Caco-2 (cell line): ENCODE measurements at regions of chr7 and their contacts with region 1.

Region 1: DNA sequence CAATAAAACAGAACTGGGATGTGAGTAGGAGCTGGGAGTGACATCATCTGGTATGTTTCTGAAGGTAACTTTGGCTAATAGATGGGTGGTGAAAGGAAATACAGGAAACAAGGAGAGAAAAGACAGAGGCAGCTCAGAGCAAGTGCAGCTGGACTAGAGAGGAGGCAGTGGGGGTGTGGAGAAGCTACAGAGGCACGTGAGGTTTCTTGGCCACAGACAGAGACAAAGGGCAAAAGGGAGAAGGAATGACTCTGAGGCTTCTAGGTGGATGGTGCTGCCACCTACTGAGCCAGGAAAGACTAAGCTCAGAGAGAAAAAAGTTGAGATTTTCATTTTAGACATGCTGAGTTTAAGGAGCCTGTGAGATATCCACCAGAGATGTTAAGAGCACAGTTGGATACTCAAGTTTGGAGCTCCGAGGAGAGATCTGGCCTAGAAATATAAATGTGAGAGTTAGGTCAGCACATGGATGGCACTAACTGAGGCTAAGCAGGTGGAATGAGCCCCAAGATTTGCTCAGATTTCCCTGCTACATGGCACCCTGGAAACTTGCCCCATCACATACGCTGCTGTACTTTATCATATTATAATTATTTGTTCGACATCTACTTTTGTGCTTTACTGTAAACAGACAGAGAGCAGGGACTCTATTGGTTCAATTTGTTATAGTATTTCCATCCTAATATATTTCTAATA is 293.0 kb upstream of the IMMP2L start:
- DNase-seq: peak; percentile 59 to 61
- H3K4me3 ChIP-seq: no peak overlapping the region
- H3K4me3 Mint-ChIP-seq: no peak overlapping the region
- H3K27ac Mint-ChIP-seq: no peak overlapping the region
- H3K4me1 ChIP-seq: peaks cover 10% of the 10 kb centered on the region
- H3K4me1 Mint-ChIP-seq: peaks cover 9% of the 10 kb centered on the region
- H3K27me3 ChIP-seq: no peaks in the 10 kb centered on the region
- H3K27me3 Mint-ChIP-seq: no peaks in the 10 kb centered on the region
- CTCF ChIP-seq: peak; percentile 46 to 75

Region 2: DNA sequence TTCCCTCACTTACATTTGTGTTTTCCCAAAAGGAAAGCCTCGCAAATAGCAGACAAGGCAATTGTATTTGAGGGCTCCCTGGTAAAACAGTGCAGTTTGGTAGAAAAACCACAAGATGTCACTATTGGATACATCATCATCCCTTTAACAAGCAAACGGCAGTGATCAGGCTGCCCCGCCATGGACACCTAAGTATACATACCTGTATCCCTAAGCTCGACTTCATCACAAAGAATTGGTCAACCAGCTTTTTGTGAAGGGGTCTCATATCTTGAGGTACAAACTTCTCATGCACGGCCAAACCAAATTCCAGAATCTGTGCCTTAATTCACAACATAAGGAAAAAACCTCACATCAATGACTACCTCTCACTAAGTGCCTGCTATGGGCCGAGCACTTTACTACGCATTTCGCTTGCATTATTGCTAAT is 113.5 kb before region 1 on chr7:
- CTCF ChIA-PET with region 1: interaction called, 40 read pairs
- POLR2A ChIA-PET with region 1: no interaction called
- intact Hi-C with region 1: loop called (anchors 1 kb)
- DNase-seq: peak; percentile 65 to 67
- H3K4me3 ChIP-seq: no peak overlapping the region
- H3K4me3 Mint-ChIP-seq: no peak overlapping the region
- H3K27ac Mint-ChIP-seq: no peak overlapping the region
- H3K4me1 ChIP-seq: peaks cover 6% of the 10 kb centered on the region; the same call in 1 of the 2 replicates
- H3K4me1 Mint-ChIP-seq: peaks cover 8% of the 10 kb centered on the region
- H3K27me3 ChIP-seq: no peaks in the 10 kb centered on the region
- H3K27me3 Mint-ChIP-seq: no peaks in the 10 kb centered on the region
- CTCF ChIP-seq: peak; percentile 69 to 70

Region 3: GRCh38 chr7:111763221-111763801 is 92.0 kb before region 1 on chr7:
- CTCF ChIA-PET with region 1: interaction called, 43 read pairs
- POLR2A ChIA-PET with region 1: no interaction called
- intact Hi-C with region 1: loop called (anchors 1 kb)
- DNase-seq: peak in 1 of 2 experiments; percentile 32
- H3K4me3 ChIP-seq: no peak overlapping the region
- H3K4me3 Mint-ChIP-seq: no peak overlapping the region
- H3K27ac Mint-ChIP-seq: no peak overlapping the region
- H3K4me1 ChIP-seq: peaks cover under 1% of the 10 kb centered on the region; the same call in 1 of the 2 replicates
- H3K4me1 Mint-ChIP-seq: no peaks in the 10 kb centered on the region
- H3K27me3 ChIP-seq: no peaks in the 10 kb centered on the region
- H3K27me3 Mint-ChIP-seq: no peaks in the 10 kb centered on the region
- CTCF ChIP-seq: peak; percentile 57 to 72

Region 4: DNA sequence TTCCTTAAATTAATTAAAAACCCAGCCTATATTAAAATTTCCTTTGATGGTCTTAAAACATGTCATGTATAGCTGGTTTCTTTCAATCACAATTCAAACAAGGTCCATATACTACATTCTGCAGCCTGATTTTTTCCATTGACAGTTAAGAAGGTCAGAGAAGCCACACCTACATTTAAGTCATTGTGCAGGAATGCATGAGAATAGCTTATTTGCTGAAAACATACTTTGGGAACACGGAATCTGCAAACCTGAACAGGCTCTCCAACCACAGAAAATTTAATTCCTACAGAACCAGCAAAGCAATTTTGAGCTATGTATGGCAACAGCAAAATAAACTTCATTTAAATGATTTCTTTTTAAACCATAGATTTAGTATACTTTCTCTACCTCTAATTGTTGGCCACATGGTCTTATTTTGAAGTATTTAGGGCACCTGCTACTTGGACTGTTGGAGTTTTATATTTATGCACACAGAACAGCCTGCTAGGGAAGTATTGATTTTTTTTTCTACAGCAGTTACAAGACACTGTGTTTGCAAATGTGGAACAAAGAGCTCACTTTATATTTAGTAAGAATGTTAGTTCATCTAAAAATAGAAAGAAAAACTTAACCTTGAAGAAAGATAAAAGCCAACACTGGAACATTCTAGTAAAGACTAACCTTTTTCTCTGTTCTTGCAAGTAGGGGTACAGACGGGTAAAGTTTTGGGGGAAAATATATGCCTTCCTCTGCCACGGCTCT is 52.1 kb before region 1 on chr7:
- CTCF ChIA-PET with region 1: no interaction called
- POLR2A ChIA-PET with region 1: no interaction called
- intact Hi-C with region 1: no loop called
- DNase-seq: no peak
- H3K4me3 ChIP-seq: no peak overlapping the region
- H3K4me3 Mint-ChIP-seq: no peak overlapping the region
- H3K27ac Mint-ChIP-seq: no peak overlapping the region
- H3K4me1 ChIP-seq: no peaks in the 10 kb centered on the region
- H3K4me1 Mint-ChIP-seq: no peaks in the 10 kb centered on the region
- H3K27me3 ChIP-seq: no peaks in the 10 kb centered on the region
- H3K27me3 Mint-ChIP-seq: no peaks in the 10 kb centered on the region
- CTCF ChIP-seq: no peak

Region 5: DNA sequence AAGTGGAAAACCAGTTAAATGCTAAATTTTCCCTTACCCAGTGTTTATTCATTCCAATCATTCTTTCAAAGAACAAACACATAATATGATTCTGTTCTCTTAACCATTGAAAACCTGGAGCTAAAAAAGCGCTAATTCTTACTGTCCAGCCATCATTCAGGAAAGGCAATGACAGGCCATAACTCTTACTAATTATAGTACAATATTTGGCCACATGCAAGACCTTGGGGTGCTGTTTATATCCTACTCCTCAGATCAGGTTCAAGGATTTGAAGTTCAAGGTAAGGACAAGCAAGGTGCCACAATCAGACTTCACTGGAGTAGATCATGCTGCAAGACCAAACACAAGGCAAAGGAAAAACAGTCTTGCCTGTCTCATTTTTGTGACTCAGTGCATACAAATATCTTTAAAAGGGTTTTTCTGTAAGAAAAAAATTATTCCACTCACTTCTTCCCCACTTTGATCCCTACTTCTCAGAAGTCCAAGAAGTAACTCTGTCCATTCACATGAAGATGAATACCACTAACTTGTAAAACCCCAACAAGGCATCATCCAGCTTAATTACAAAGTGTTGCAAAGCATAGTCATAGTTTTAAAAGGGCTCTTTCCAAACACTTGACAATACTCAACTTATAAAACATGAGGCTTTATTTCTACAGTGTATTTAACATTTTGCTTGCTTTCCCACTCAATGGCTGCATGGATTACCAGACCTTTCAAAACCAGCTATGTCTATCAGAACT is 197.9 kb after region 1 on chr7:
- CTCF ChIA-PET with region 1: no interaction called
- POLR2A ChIA-PET with region 1: no interaction called
- intact Hi-C with region 1: no loop called
- DNase-seq: no peak
- H3K4me3 ChIP-seq: no peak overlapping the region
- H3K4me3 Mint-ChIP-seq: peak overlapping the region; percentile 41
- H3K27ac Mint-ChIP-seq: no peak overlapping the region
- H3K4me1 ChIP-seq: peaks cover 10% of the 10 kb centered on the region
- H3K4me1 Mint-ChIP-seq: peaks cover 16% of the 10 kb centered on the region
- H3K27me3 ChIP-seq: no peaks in the 10 kb centered on the region
- H3K27me3 Mint-ChIP-seq: no peaks in the 10 kb centered on the region
- CTCF ChIP-seq: no peak